ENCODE measurements at regions of chr5 and their contacts with region 1.

Region 1: DNA sequence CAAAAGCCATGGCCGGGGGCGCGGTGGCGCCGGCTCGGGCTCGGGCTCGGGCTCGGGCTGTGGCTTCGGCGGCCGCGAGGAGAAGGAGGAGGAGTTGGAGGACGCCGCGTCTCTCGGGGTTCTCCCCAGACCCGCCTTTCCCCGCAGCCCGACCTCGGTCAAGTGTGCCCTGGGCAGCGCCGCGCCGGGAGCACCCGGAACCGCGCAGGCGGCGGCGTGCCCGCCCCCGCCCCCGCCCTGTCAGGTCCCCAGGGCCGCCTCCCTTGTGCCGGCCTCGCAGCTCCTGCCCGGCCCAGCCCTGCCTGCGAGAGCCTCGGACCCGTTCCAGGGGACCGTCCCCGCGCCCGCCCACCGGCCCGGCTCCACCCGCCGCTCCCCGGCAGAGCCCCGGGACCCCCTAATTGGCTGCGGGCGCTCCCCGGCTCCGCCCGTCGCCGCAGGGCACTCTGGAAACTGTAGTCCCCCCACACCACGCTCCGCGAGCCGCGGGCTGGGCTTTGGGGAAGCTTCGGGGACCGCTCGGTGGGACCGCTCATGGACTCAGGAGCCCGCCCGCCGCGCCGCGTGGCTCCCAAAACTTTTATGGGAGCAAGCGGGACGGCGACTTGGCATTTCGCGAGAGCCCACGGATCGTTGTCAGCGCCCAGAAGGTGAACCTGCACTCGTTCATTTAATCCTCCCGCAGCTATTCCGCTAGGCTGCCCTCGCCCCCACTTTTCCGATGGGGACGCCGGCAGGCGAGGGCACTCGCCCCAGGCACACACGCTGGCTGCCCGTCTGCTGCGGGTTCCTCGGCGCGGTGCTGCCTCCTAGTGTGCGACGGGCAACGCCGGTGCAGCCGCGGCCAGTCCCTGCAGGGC is at the start of gene STK10:
- DNase-seq: peak; percentile 90
- H3K4me3 ChIP-seq: peak within 1 kb of the TSS; percentile 89 to 99 (median 97)
- H3K27ac ChIP-seq: peak within 1 kb of the TSS; percentile 90
- H3K4me1 ChIP-seq: peaks cover 12% of the 10 kb centered on the region
- H3K27me3 ChIP-seq: no peaks in the 10 kb centered on the region
- CTCF ChIP-seq: peak; percentile 82 to 95
- total RNA-seq, gene STK10: 50.8 to 65.0 TPM

Region 2: DNA sequence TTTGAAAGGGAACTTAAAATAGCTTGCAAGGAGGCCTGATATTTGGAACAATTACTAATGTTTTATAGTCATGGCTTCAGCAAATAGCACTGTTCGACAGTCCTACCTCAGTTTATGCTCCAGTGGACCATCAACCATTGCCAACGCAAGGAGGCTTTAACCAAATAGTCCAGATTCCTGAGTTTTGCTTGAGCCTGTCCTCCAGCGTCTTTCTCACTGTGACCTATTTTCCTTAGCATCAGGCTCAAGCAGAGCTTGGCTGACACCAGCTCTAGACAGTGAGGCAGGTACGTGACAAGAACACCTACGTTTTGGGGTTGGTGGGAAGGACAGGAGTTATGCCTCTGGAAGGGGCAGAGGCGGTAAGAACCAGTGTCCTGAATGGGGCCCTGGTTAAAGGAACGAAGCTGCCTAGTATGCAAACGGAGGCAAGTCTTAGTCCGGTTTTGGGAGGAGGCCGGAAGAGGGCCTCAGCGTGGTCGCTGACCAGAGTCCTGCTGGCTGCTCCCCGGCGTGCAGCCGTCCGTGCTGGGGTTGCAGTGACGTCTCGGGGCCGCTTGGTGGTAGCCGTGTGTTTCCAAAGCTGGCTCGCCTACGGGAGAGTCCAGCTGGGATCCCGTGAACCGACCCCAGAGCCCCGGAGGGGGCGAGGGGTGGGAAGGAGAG is 769.8 kb before region 1 on chr5:
- CTCF ChIA-PET with region 1: no interaction called
- dilution Hi-C with region 1: no loop called
- in situ Hi-C with region 1: no loop called
- intact Hi-C with region 1: loop called (anchors 10 kb)
- DNase-seq: peak; percentile 70
- H3K4me3 ChIP-seq: peak overlapping the region in 1 of 3 experiments; percentile 31
- H3K27ac ChIP-seq: no peak overlapping the region
- H3K4me1 ChIP-seq: peaks cover 15% of the 10 kb centered on the region
- H3K27me3 ChIP-seq: peaks cover 8% of the 10 kb centered on the region
- CTCF ChIP-seq: peak; percentile 77 to 89

Region 3: DNA sequence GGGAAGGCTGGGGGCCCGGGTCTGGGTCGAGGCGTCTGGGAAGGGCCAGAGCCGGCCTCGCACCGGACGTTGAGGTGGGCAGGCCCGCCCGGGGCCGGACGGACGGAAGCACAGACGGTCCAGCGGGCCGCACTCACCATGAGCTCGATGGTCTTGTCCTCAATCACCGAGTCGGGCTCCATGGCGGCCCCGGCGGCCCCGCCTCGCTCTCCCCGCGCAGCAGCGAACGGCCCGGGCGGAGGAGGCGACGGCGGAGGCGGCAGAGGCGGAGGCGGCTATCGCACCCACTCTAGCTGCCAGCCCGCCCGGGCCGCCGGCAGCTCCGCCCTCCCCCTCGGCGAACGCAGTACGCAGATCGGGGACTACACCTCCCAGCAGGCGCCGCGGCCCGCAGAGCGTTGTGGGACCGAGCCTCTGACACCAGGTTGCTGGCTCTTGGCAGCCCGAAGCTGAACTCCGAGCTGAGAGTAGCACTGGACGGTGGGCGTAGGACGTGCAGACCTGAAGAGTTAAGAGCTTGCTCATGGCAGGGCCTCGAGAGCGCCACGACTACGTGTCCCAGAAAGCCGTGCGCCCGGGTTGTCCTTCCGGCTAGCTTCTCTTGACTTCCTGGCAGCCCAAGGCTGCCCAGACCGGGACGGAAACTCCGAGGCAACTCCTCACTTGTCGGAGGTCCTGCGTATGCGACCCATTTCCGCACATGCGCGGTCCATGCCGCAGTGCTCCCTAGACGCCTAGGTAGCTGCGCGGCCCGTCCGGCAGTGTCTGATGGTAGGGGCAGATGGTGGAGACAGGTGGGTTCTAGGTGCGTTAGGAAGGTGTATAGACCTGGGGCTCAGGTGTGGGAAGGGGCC is 181.7 kb before region 1 on chr5 and contains the start of gene FBXW11:
- CTCF ChIA-PET with region 1: interaction called, 3 read pairs
- dilution Hi-C with region 1: no loop called
- in situ Hi-C with region 1: no loop called
- intact Hi-C with region 1: loop called (anchors 1 kb)
- DNase-seq: peak; percentile 97
- H3K4me3 ChIP-seq: peak within 1 kb of the TSS; percentile 73 to 98 (median 77)
- H3K27ac ChIP-seq: peak within 1 kb of the TSS; percentile 88
- H3K4me1 ChIP-seq: peaks cover 54% of the 10 kb centered on the region
- H3K27me3 ChIP-seq: no peaks in the 10 kb centered on the region
- CTCF ChIP-seq: no peak
- total RNA-seq, gene FBXW11: 39.2 to 62.0 TPM

Region 4: GRCh38 chr5:172035039-172035438 is 153.2 kb before region 1 on chr5:
- CTCF ChIA-PET with region 1: no interaction called
- dilution Hi-C with region 1: no loop called
- in situ Hi-C with region 1: no loop called
- intact Hi-C with region 1: no loop called
- DNase-seq: peak; percentile 83
- H3K4me3 ChIP-seq: no peak overlapping the region
- H3K27ac ChIP-seq: no peak overlapping the region
- H3K4me1 ChIP-seq: peaks cover 10% of the 10 kb centered on the region
- H3K27me3 ChIP-seq: no peaks in the 10 kb centered on the region
- CTCF ChIP-seq: no peak

Region 5: GRCh38 chr5:172059661-172060100 is 128.6 kb before region 1 on chr5:
- CTCF ChIA-PET with region 1: interaction called, 3 read pairs
- dilution Hi-C with region 1: no loop called
- in situ Hi-C with region 1: no loop called
- intact Hi-C with region 1: loop called (anchors 5 kb)
- DNase-seq: no peak
- H3K4me3 ChIP-seq: no peak overlapping the region
- H3K27ac ChIP-seq: no peak overlapping the region
- H3K4me1 ChIP-seq: no peaks in the 10 kb centered on the region
- H3K27me3 ChIP-seq: no peaks in the 10 kb centered on the region
- CTCF ChIP-seq: peak; percentile 42 to 55

Region 6: GRCh38 chr5:172133359-172134029 is 54.8 kb before region 1 on chr5:
- CTCF ChIA-PET with region 1: interaction called, 4 read pairs
- dilution Hi-C with region 1: no loop called
- in situ Hi-C with region 1: no loop called
- intact Hi-C with region 1: loop called (anchors 1 kb)
- DNase-seq: peak; percentile 91
- H3K4me3 ChIP-seq: no peak overlapping the region
- H3K27ac ChIP-seq: peak overlapping the region; percentile 52
- H3K4me1 ChIP-seq: peaks cover 13% of the 10 kb centered on the region
- H3K27me3 ChIP-seq: no peaks in the 10 kb centered on the region
- CTCF ChIP-seq: no peak

Region 7: DNA sequence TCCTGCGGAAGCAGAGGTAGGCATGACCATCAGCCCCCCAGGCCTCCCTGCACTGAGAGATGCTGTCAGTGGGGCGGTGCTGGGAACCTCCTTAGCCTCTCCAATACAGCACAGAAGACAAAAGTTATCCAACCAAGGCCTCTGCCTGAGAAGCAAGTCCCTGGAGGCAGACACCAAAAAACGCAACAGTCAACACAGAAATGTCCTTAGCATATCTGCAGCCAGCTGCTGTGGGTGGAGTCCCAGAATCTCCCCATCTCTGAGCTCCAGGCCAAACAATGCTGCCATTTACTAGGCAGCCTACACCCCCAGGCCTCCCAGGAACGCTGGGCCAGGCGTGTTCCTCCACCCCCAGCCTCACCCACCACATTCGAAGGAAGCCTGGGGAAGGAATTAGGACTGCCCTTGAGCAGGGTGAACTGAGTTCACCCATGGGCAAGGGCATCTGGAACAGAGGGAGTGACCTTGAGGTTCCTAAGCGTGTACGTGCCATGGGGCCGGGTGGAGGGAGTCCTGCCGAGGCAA is 43.9 kb before region 1 on chr5:
- CTCF ChIA-PET with region 1: no interaction called
- dilution Hi-C with region 1: no loop called
- in situ Hi-C with region 1: no loop called
- intact Hi-C with region 1: no loop called
- DNase-seq: peak; percentile 74
- H3K4me3 ChIP-seq: no peak overlapping the region
- H3K27ac ChIP-seq: no peak overlapping the region
- H3K4me1 ChIP-seq: peaks cover 20% of the 10 kb centered on the region
- H3K27me3 ChIP-seq: no peaks in the 10 kb centered on the region
- CTCF ChIP-seq: no peak

Region 8: GRCh38 chr5:172283020-172283861 is 95.0 kb after region 1 on chr5 and contains the start of gene UBTD2:
- CTCF ChIA-PET with region 1: interaction called, 6 read pairs
- dilution Hi-C with region 1: no loop called
- in situ Hi-C with region 1: no loop called
- intact Hi-C with region 1: loop called (anchors 1 kb)
- DNase-seq: peak; percentile 77
- H3K4me3 ChIP-seq: peak within 1 kb of the TSS; percentile 89 to 97 (median 90)
- H3K27ac ChIP-seq: peak within 1 kb of the TSS; percentile 72
- H3K4me1 ChIP-seq: peaks cover 10% of the 10 kb centered on the region
- H3K27me3 ChIP-seq: no peaks in the 10 kb centered on the region
- CTCF ChIP-seq: peak; percentile 11 to 57
- total RNA-seq, gene UBTD2: 15.5 to 17.8 TPM

Region 9: GRCh38 chr5:172370648-172371545 is 182.6 kb after region 1 on chr5:
- CTCF ChIA-PET with region 1: no interaction called
- dilution Hi-C with region 1: no loop called
- in situ Hi-C with region 1: no loop called
- intact Hi-C with region 1: loop called (anchors 2 kb)
- DNase-seq: peak; percentile 45
- H3K4me3 ChIP-seq: no peak overlapping the region
- H3K27ac ChIP-seq: no peak overlapping the region
- H3K4me1 ChIP-seq: peaks cover 4% of the 10 kb centered on the region
- H3K27me3 ChIP-seq: no peaks in the 10 kb centered on the region
- CTCF ChIP-seq: peak; percentile 66 to 91

Measured in mammary epithelial cell (primary cell).